Activated CD4-positive, alpha-beta T cell treated with anti-CD3 and anti-CD28 coated beads, Interleukin-2, amount 10 ng/mL, durations not matched to agents 24 days and 14 days (primary cell): ENCODE measurements at regions of chr19 and their contacts with region 1.

Region 1: DNA sequence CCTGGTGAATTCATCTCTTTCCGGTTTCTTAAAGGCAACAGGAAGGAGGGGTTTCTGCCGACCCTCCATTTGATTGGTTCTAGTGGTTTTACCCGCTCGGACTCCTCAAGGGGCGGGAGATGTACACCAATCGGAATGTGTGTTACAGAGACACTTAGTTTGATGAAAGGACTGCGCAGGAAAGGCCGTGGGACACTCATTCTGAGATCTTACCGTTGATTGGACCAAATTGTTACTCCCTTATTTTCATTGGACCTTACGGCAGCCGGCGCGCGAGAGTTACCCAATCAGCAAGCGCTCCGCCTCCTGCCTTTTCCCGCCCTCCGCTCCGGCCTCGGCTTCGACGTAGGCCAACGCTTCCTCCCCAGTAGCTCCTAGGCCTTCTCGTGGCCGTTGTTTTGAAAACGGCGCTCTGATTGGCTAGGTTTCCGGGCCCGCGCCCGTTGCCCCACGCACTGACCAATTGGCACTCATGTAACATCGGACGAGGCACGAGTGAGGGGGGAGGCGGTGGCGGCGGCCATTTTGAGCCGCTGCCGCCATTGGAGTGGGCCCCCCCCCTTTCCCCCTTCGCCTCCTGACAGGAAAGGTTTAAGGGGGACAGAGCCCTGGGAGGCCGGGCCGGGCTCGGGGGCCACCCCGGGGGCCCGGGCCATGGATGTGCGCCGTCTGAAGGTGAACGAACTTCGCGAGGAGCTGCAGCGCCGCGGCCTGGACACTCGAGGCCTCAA is at the start of gene HNRNPUL1:
- DNase-seq: peak; percentile 100
- H3K4me3 Mint-ChIP-seq: peak within 1 kb of the TSS; percentile 92
- H3K27ac Mint-ChIP-seq: peak within 1 kb of the TSS; percentile 100
- H3K4me1 Mint-ChIP-seq: peaks cover 47% of the 10 kb centered on the region
- H3K27me3 Mint-ChIP-seq: peaks cover 8% of the 10 kb centered on the region
- total RNA-seq, gene HNRNPUL1: 256 and 258 TPM in 2 replicates

Region 2: DNA sequence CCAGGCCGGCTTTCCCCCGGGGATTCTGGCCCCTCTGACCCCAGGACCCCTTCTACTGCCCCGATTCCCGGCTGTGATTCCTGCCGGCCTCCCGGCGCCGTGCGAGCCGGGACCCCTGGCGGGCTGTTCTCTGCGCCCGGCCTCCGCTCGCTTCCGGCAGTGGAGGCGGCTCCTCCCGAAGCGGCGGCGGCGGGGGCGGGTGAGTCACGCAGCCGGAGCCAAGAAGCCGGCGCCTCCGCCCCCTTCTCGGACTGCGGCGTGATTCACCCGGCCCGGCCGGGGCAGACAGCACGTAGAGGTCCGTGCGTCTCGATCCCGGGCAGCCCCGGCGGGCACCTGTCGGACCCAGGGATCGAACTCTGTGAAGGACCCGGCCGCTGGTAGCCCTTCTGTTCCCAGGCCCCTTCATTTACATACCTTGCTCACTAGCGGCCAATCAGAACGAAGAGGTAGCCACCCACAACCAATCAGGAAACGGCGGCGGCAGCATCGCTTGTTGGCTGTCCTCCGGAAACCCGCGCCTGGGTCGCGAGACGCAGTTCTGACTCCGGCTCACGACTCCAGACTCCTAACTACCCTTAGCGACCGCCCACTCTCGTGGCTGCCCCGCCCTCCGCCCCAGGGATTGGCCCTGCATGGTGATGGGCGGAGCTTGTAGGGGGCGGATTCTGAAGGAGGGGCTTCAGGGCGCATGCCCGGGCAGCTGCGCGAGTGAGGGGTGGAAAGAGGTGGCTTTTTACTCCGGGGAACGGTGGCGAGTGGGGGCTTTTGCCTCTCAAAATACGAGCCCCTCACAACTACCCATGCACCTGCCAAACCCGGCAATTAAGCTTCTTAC is 838.3 kb before region 1 on chr19 and contains the start of gene SERTAD1:
- intact Hi-C with region 1: loop called (anchors 10 kb)
- DNase-seq: peak; percentile 100
- H3K4me3 Mint-ChIP-seq: peak within 1 kb of the TSS; percentile 92
- H3K27ac Mint-ChIP-seq: peak within 1 kb of the TSS; percentile 91
- H3K4me1 Mint-ChIP-seq: peaks cover 26% of the 10 kb centered on the region
- H3K27me3 Mint-ChIP-seq: peaks cover 5% of the 10 kb centered on the region
- total RNA-seq, gene SERTAD1: 19.3 and 20.8 TPM in 2 replicates

Region 3: GRCh38 chr19:40750059-40750873 is 513.7 kb before region 1 on chr19 and contains the start of gene ACTMAP:
- intact Hi-C with region 1: loop called (anchors 2 kb)
- DNase-seq: peak; percentile 100
- H3K4me3 Mint-ChIP-seq: peak within 1 kb of the TSS; percentile 92
- H3K27ac Mint-ChIP-seq: peak within 1 kb of the TSS; percentile 100
- H3K4me1 Mint-ChIP-seq: peaks cover 37% of the 10 kb centered on the region
- H3K27me3 Mint-ChIP-seq: no peaks in the 10 kb centered on the region
- total RNA-seq, gene ACTMAP: 8.6 and 9.4 TPM in 2 replicates

Region 4: GRCh38 chr19:41225238-41226052 is 38.6 kb before region 1 on chr19:
- intact Hi-C with region 1: loop called (anchors 1 kb)
- DNase-seq: peak; percentile 69
- H3K4me3 Mint-ChIP-seq: peak overlapping the region; percentile 78
- H3K27ac Mint-ChIP-seq: peak overlapping the region; percentile 88
- H3K4me1 Mint-ChIP-seq: peaks cover 25% of the 10 kb centered on the region
- H3K27me3 Mint-ChIP-seq: peaks cover 19% of the 10 kb centered on the region

Region 5: GRCh38 chr19:41238244-41238643 is 25.8 kb before region 1 on chr19:
- intact Hi-C with region 1: no loop called
- DNase-seq: no peak
- H3K4me3 Mint-ChIP-seq: no peak overlapping the region
- H3K27ac Mint-ChIP-seq: no peak overlapping the region
- H3K4me1 Mint-ChIP-seq: no peaks in the 10 kb centered on the region
- H3K27me3 Mint-ChIP-seq: peaks cover 3% of the 10 kb centered on the region

Region 6: DNA sequence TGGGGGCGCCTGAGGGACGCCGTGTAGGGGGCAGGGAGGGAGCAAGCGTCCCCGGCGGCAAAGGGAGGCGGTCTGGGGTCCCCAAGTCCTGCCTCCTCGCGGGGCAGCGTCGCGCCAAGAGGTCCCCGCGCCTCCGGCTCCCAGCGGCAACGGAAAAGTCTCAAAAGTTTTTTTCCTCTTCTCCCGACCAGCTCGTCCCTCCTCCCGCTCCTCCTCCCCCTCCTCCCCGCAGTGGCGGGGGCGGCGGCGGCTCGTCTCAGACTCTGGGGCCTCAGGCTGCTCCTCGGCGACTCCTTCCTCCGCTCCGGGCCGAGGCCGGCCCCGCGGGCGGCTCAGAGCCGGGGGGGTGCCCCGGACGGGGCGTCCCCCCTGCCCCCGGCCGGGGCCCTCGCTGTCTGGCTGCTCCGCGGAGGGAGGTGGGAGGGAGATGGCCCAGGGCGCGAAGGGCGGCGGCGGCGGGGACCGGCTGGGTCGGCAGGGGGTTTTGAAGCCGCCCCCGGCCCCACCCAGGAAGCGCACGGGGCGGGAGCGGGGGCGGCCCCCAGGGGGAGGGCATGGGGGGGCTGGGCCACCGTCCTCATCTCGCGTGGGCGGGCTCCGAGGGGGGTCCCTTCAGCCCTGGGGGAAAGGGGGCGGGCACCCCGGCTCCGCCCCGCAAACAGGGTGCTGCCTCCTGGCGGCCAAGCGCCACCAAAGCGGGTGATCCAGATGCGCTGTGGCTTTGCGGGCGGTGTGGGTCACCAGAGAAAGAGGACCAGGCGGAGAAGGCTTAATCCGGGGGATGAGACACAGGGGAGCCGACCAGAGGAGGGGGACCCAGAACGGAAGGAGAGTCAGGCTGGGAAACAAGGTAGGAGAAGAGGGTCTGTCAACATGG is 89.7 kb after region 1 on chr19 and contains the start of gene TGFB1:
- intact Hi-C with region 1: loop called (anchors 1 kb)
- DNase-seq: peak; percentile 98
- H3K4me3 Mint-ChIP-seq: peak within 1 kb of the TSS; percentile 92
- H3K27ac Mint-ChIP-seq: peak within 1 kb of the TSS; percentile 96
- H3K4me1 Mint-ChIP-seq: peaks cover 56% of the 10 kb centered on the region
- H3K27me3 Mint-ChIP-seq: no peaks in the 10 kb centered on the region
- total RNA-seq, gene TGFB1: 125 and 127 TPM in 2 replicates

Region 7: DNA sequence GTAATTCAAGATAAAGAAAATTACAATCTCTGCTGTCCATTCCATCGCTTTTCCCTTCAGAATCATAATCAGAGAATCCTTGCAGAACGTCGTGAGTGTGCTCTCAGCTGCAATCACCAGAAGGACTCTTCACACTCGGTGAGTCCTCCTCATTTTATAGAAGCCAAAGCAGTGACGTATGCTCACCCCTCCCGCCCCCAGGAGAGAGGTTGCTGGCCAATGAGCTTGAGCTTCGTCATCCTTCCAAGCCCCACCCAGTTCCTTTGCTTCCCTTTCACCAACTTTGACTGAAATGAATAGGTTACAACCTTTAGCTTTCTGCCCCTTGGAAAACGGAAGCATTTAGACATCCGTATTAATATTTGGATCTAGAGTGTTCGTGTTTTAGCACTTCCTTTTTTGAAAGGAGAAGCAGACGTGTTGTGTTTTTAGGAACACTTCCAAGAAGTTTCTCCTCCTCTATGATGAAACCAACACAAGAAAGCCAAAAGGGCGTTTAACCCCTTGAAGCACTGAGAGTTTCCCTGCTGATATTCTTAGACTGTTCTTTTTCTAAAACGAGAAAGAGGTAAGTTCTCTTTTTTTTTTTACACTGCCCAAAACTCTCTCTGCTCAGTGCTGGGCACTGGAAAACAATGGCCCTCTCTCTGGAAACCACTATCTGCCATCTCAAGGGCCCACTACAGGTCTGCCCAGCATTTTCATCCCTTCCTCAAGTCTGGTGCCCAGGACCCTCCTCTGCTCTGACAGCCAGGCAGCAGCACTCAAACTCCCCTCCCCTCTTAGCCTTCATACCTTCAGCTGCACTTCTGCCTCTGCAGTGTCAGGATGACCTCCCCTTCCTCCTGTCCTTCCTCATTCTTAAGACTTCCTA is 267.7 kb after region 1 on chr19:
- intact Hi-C with region 1: loop called (anchors 5 kb)
- DNase-seq: peak; percentile 96
- H3K4me3 Mint-ChIP-seq: peak overlapping the region; percentile 84
- H3K27ac Mint-ChIP-seq: peak overlapping the region; percentile 88
- H3K4me1 Mint-ChIP-seq: peaks cover 61% of the 10 kb centered on the region
- H3K27me3 Mint-ChIP-seq: peaks cover 4% of the 10 kb centered on the region